CD8-positive, alpha-beta T cell (primary cell): ENCODE measurements at regions of chr6 and their contacts with region 1.

Region 1: GRCh38 chr6:117602151-117602898 is at the start of gene GOPC:
- DNase-seq: peak; percentile 88 to 99 (median 93)
- ATAC-seq: peak; percentile 94
- H3K4me3 ChIP-seq: peak within 1 kb of the TSS; percentile 76 to 86
- H3K4me3 Mint-ChIP-seq: peak within 1 kb of the TSS; percentile 100
- H3K27ac ChIP-seq: peak within 1 kb of the TSS; percentile 79 to 85
- H3K27ac Mint-ChIP-seq: peak within 1 kb of the TSS; percentile 99
- H3K4me1 ChIP-seq: peaks cover 16% of the 10 kb centered on the region
- H3K4me1 Mint-ChIP-seq: peaks cover 46% of the 10 kb centered on the region
- H3K27me3 ChIP-seq: no peaks in the 10 kb centered on the region
- H3K27me3 Mint-ChIP-seq: no peaks in the 10 kb centered on the region
- CTCF ChIP-seq: no peak
- total RNA-seq, gene GOPC: 7.5 to 8.1 TPM

Region 2: GRCh38 chr6:116570856-116571682 is 1031.3 kb before region 1 on chr6 and contains the start of gene RWDD1:
- CTCF ChIA-PET with region 1: no interaction called
- POLR2A ChIA-PET with region 1: no interaction called
- intact Hi-C with region 1: loop called (anchors 2 to 10 kb)
- DNase-seq: peak; percentile 94 to 99 (median 98)
- ATAC-seq: peak; percentile 95
- H3K4me3 ChIP-seq: peak within 1 kb of the TSS; percentile 75 to 93
- H3K4me3 Mint-ChIP-seq: peak within 1 kb of the TSS; percentile 99
- H3K27ac ChIP-seq: peak within 1 kb of the TSS; percentile 92 to 99
- H3K27ac Mint-ChIP-seq: peak within 1 kb of the TSS; percentile 99
- H3K4me1 ChIP-seq: peaks cover 32% of the 10 kb centered on the region
- H3K4me1 Mint-ChIP-seq: peaks cover 52% of the 10 kb centered on the region
- H3K27me3 ChIP-seq: no peaks in the 10 kb centered on the region
- H3K27me3 Mint-ChIP-seq: no peaks in the 10 kb centered on the region
- CTCF ChIP-seq: no peak
- total RNA-seq, gene RWDD1: 65.1 to 68.7 TPM

Region 3: GRCh38 chr6:116714761-116715160 is 887.6 kb before region 1 on chr6:
- CTCF ChIA-PET with region 1: no interaction called
- POLR2A ChIA-PET with region 1: no interaction called
- intact Hi-C with region 1: no loop called
- DNase-seq: no peak
- ATAC-seq: no peak
- H3K4me3 ChIP-seq: no peak overlapping the region
- H3K4me3 Mint-ChIP-seq: no peak overlapping the region
- H3K27ac ChIP-seq: no peak overlapping the region
- H3K27ac Mint-ChIP-seq: no peak overlapping the region
- H3K4me1 ChIP-seq: no peaks in the 10 kb centered on the region
- H3K4me1 Mint-ChIP-seq: peaks cover 14% of the 10 kb centered on the region
- H3K27me3 ChIP-seq: no peaks in the 10 kb centered on the region
- H3K27me3 Mint-ChIP-seq: no peaks in the 10 kb centered on the region
- CTCF ChIP-seq: no peak

Region 4: GRCh38 chr6:117215353-117216090 is 386.8 kb before region 1 on chr6:
- CTCF ChIA-PET with region 1: no interaction called
- POLR2A ChIA-PET with region 1: no interaction called
- intact Hi-C with region 1: no loop called
- DNase-seq: peak in 1 of 9 experiments; percentile 12
- ATAC-seq: no peak
- H3K4me3 ChIP-seq: no peak overlapping the region
- H3K4me3 Mint-ChIP-seq: no peak overlapping the region
- H3K27ac ChIP-seq: no peak overlapping the region
- H3K27ac Mint-ChIP-seq: no peak overlapping the region
- H3K4me1 ChIP-seq: no peaks in the 10 kb centered on the region
- H3K4me1 Mint-ChIP-seq: no peaks in the 10 kb centered on the region
- H3K27me3 ChIP-seq: no peaks in the 10 kb centered on the region
- H3K27me3 Mint-ChIP-seq: no peaks in the 10 kb centered on the region
- CTCF ChIP-seq: no peak

Region 5: DNA sequence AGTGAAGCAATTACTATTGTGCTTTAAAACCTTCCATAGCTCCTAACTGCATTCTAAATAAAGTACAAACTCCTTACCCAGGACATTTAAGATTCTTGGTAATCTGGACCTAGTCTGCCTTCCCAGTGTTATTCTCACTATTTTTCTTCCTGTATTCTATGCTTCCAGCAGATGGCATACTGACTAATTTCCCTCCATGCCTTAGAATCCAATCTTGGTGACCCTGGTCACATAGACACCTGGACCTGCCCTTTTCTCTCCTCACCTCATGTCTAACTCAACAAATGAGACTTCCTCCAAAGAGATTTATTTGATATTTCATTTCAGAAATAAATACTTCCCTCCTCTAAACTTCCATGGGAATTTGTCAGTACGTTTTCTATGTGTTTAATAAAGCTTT is 202.4 kb before region 1 on chr6:
- CTCF ChIA-PET with region 1: no interaction called
- POLR2A ChIA-PET with region 1: no interaction called
- intact Hi-C with region 1: loop called in 1 of 2 experiments (anchors 1 kb)
- DNase-seq: no peak
- ATAC-seq: no peak
- H3K4me3 ChIP-seq: no peak overlapping the region
- H3K4me3 Mint-ChIP-seq: no peak overlapping the region
- H3K27ac ChIP-seq: no peak overlapping the region
- H3K27ac Mint-ChIP-seq: no peak overlapping the region
- H3K4me1 ChIP-seq: no peaks in the 10 kb centered on the region
- H3K4me1 Mint-ChIP-seq: no peaks in the 10 kb centered on the region
- H3K27me3 ChIP-seq: peaks cover 0 to 3% of the 10 kb centered on the region in 2 experiments
- H3K27me3 Mint-ChIP-seq: peaks cover 2% of the 10 kb centered on the region
- CTCF ChIP-seq: no peak

Region 6: GRCh38 chr6:117547688-117548621 is 54.4 kb before region 1 on chr6:
- CTCF ChIA-PET with region 1: interaction called, 20 read pairs
- POLR2A ChIA-PET with region 1: interaction called, 12 read pairs
- intact Hi-C with region 1: loop called (anchors 1 to 2 kb)
- DNase-seq: peak; percentile 12 to 76 (median 50)
- ATAC-seq: peak; percentile 42
- H3K4me3 ChIP-seq: peak overlapping the region; percentile 55 to 69
- H3K4me3 Mint-ChIP-seq: peak overlapping the region; percentile 85
- H3K27ac ChIP-seq: peak overlapping the region; percentile 64 to 70
- H3K27ac Mint-ChIP-seq: peak overlapping the region; percentile 92
- H3K4me1 ChIP-seq: peaks cover 35% of the 10 kb centered on the region
- H3K4me1 Mint-ChIP-seq: peaks cover 43% of the 10 kb centered on the region
- H3K27me3 ChIP-seq: no peaks in the 10 kb centered on the region
- H3K27me3 Mint-ChIP-seq: no peaks in the 10 kb centered on the region
- CTCF ChIP-seq: no peak

Region 7: GRCh38 chr6:118171852-118172251 is 569.5 kb after region 1 on chr6:
- CTCF ChIA-PET with region 1: no interaction called
- POLR2A ChIA-PET with region 1: no interaction called
- intact Hi-C with region 1: no loop called
- DNase-seq: no peak
- ATAC-seq: no peak
- H3K4me3 ChIP-seq: no peak overlapping the region
- H3K4me3 Mint-ChIP-seq: no peak overlapping the region
- H3K27ac ChIP-seq: no peak overlapping the region
- H3K27ac Mint-ChIP-seq: no peak overlapping the region
- H3K4me1 ChIP-seq: no peaks in the 10 kb centered on the region
- H3K4me1 Mint-ChIP-seq: no peaks in the 10 kb centered on the region
- H3K27me3 ChIP-seq: no peaks in the 10 kb centered on the region
- H3K27me3 Mint-ChIP-seq: peaks cover 4% of the 10 kb centered on the region
- CTCF ChIP-seq: no peak

Region 8: DNA sequence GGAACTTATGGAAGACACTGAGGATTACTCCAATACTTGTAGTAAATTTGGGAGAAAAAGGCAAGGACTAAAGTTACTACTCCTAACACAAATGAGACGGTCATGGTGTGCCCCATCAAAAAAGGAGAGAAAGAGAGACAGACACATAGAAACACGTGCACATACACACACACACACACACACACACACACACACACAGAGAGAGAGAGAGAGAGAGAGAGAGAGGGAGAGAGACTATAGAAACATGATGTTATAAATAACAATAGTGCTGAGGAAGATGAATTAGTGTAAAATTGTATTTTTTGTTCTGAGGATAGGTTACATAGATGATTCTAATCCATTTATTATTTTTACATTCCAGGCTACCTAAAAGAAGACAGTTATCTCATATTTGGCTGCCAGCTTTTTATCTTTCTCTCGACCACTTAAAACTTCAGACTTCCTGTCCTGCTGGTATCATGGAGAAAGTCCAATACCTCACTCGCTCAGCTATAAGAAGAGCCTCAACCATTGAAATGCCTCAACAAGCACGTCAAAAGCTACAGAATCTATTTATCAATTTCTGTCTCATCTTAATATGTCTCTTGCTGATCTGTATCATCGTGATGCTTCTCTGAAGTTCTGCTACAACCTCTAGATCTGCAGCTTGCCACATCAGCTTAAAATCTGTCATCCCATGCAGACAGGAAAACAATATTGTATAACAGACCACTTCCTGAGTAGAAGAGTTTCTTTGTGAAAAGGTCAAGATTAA is 956.3 kb after region 1 on chr6:
- CTCF ChIA-PET with region 1: no interaction called
- POLR2A ChIA-PET with region 1: no interaction called
- intact Hi-C with region 1: loop called in 1 of 2 experiments (anchors 5 kb)
- DNase-seq: peak in 5 of 9 experiments; percentile 11 to 80 (median 45)
- ATAC-seq: peak; percentile 90
- H3K4me3 ChIP-seq: peak overlapping the region; percentile 16 to 18
- H3K4me3 Mint-ChIP-seq: peak overlapping the region; percentile 73
- H3K27ac ChIP-seq: peak overlapping the region; percentile 67 to 78
- H3K27ac Mint-ChIP-seq: peak overlapping the region; percentile 97
- H3K4me1 ChIP-seq: peaks cover 23% of the 10 kb centered on the region
- H3K4me1 Mint-ChIP-seq: peaks cover 58% of the 10 kb centered on the region
- H3K27me3 ChIP-seq: no peaks in the 10 kb centered on the region
- H3K27me3 Mint-ChIP-seq: no peaks in the 10 kb centered on the region
- CTCF ChIP-seq: no peak